ACHN (cell line): ENCODE measurements at regions of chr10 and their contacts with region 1.

Region 1: GRCh38 chr10:95406651-95407280 is 116.0 kb upstream of the PDLIM1 start:
- DNase-seq: no peak

Region 2: DNA sequence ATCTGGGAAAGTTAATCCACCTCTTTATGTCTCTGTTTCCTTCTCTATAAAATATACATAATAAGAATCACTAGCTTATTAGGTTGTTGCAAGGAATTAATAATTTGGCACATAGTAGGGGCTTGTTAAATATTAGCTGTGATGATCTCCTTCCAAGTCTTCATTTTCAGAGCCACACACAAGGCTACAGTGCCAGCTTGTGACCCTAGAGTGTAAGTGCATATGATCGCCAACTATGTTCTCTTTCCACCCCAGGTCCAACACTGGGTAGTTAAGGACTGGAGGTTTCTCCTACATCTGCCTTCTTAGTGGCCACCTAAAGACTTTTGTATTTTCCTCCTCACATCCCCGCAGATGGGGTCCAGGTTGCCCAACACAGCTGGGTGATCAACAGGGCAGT is 230.7 kb before region 1 on chr10:
- in situ Hi-C with region 1: no loop called
- DNase-seq: no peak

Region 3: GRCh38 chr10:95295031-95295755 is 111.6 kb before region 1 on chr10:
- in situ Hi-C with region 1: no loop called
- DNase-seq: peak; percentile 53

Region 4: GRCh38 chr10:95601116-95601719 is 194.5 kb after region 1 on chr10:
- in situ Hi-C with region 1: loop called (anchors 25 kb)
- DNase-seq: peak; percentile 90